Activated B cell treated with CpG ODN at 0.5 μM for 24 hours (primary cell): ENCODE measurements at regions of chr10 and their contacts with region 1.

Region 1: DNA sequence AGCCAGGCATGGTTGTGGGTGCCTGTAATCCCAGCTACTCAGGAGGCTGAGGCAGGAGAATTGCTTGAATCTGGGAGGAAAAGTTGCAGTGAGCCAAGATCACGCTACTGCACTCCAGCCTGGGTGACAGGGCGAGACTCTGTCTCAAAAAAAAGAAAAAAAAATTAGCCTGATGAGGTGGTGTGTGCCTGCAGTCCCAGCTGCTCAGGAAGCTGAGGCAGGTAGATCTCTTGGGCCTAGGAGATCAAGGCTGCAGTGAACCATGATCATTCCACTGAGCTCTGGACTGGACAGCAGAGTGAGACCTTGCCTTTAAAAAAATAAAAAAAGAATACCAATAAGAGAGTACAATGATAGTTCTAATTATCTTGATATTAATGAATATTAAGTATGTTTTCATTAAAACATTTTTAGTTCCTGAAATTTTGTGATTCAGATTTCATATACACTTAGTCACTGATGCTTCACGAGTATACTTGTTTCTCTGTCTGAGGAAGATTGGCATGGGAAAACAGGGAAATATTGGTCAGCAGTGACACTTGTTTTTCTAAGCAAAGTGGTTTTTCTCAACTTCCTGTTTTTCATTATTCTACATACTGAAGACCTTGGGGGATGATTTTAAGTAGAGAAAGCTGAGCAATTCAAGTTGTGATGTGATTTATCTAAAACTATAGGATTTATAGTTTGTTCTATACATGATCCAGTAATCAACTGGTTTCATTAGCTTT is 76.8 kb downstream of the ADK start:
- DNase-seq: no peak
- ATAC-seq: peak; percentile 61
- H3K4me3 Mint-ChIP-seq: peak overlapping the region; percentile 61
- H3K27ac Mint-ChIP-seq: peak overlapping the region; percentile 63
- H3K4me1 Mint-ChIP-seq: peaks cover 23% of the 10 kb centered on the region
- H3K27me3 Mint-ChIP-seq: no peaks in the 10 kb centered on the region
- CTCF ChIP-seq: no peak

Region 2: DNA sequence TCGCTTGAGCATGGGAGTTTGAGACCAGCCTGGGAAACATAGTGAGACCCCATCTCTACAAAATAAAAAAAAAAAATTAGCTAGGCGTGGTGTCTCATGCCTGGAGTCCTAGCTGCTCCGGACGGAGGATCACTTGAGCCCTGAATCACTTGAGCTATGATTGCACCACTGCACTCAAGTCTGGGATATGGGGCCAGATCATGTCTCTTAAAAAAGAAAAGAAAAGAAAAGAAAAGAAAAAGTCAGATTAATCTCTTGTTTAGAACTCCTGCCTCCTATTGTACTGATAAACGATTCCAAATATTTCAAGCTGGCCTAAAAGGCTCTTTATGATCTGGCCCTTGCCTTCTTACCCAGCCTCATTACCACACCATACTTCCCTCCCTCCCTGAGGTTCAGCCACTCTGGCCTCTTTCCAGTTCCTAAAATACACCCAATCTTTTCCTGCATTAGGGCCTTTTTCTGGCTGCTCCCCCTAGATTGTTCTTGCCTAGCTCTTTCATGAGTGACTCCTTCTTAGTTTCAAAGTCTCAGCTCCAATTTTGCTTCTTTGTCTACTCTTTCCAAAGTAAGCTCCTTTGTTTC is 188.2 kb before region 1 on chr10:
- CTCF ChIA-PET with region 1: no interaction called
- POLR2A ChIA-PET with region 1: no interaction called
- intact Hi-C with region 1: no loop called
- DNase-seq: no peak
- ATAC-seq: no peak
- H3K4me3 Mint-ChIP-seq: no peak overlapping the region
- H3K27ac Mint-ChIP-seq: no peak overlapping the region
- H3K4me1 Mint-ChIP-seq: peaks cover 24% of the 10 kb centered on the region
- H3K27me3 Mint-ChIP-seq: no peaks in the 10 kb centered on the region
- CTCF ChIP-seq: no peak

Region 3: DNA sequence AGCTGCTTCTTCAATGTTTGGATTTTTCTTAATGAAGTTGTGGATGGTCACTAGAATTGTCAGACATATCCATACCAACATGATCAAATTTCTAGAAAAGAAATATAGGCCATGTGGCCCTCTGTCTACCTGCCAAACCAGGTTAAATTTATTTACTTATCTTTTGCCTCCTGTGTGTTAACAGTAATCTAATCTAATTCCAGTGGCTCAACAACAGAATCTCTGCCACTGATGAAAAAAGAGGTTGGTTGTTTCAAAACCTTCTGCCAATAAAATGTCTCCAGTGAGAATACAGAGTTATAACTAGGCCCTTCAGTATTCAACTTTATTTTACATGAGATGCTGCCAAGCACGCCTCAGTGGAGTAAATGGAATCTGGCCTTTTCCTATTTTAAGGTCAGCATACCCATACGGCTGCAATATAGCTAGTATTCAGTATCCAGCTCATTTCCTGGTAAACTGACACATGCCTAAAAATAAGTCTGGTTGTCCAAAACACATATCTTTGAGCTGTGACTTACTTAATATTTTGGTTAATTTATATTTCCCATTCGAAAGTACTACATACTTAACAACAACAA is 93.5 kb before region 1 on chr10:
- CTCF ChIA-PET with region 1: no interaction called
- POLR2A ChIA-PET with region 1: no interaction called
- intact Hi-C with region 1: no loop called
- DNase-seq: no peak
- ATAC-seq: no peak
- H3K4me3 Mint-ChIP-seq: no peak overlapping the region
- H3K27ac Mint-ChIP-seq: no peak overlapping the region
- H3K4me1 Mint-ChIP-seq: no peaks in the 10 kb centered on the region
- H3K27me3 Mint-ChIP-seq: no peaks in the 10 kb centered on the region
- CTCF ChIP-seq: no peak

Region 4: DNA sequence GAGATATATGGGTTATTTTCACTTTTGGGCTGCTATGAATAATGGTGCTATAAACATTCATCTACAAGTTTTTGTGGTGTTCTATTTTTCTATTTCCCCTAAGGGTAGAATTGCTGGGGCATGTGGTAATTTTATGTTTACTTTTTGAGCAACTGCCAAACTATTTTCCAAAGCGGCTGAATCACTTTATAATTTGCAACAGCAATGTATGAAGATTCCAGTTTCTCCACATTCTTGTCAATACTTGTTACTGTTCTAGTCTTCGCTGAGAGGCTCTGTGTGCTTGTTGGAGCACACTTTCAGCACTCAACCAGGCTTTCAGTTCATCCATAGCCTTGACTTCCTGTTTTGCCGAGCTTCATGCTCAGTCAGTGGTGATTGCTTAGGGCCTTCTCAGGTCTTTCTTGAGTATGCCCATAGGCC is 37.9 kb before region 1 on chr10:
- CTCF ChIA-PET with region 1: no interaction called
- POLR2A ChIA-PET with region 1: no interaction called
- intact Hi-C with region 1: loop called (anchors 5 kb)
- DNase-seq: no peak
- ATAC-seq: peak; percentile 97
- H3K4me3 Mint-ChIP-seq: peak overlapping the region; percentile 67
- H3K27ac Mint-ChIP-seq: peak overlapping the region; percentile 92
- H3K4me1 Mint-ChIP-seq: peaks cover 81% of the 10 kb centered on the region
- H3K27me3 Mint-ChIP-seq: no peaks in the 10 kb centered on the region
- CTCF ChIP-seq: no peak

Region 5: GRCh38 chr10:74293686-74294371 is 66.0 kb after region 1 on chr10:
- CTCF ChIA-PET with region 1: no interaction called
- POLR2A ChIA-PET with region 1: no interaction called
- intact Hi-C with region 1: no loop called
- DNase-seq: no peak
- ATAC-seq: no peak
- H3K4me3 Mint-ChIP-seq: no peak overlapping the region
- H3K27ac Mint-ChIP-seq: no peak overlapping the region
- H3K4me1 Mint-ChIP-seq: peaks cover 37% of the 10 kb centered on the region
- H3K27me3 Mint-ChIP-seq: no peaks in the 10 kb centered on the region
- CTCF ChIP-seq: no peak